ENCODE measurements at regions of chr3 and their contacts with region 1.

Region 1: GRCh38 chr3:81666493-81667121 is 94.8 kb downstream of the GBE1 start:
- DNase-seq: peak; percentile 15
- H3K4me3 ChIP-seq: no peak overlapping the region
- H3K27ac ChIP-seq: no peak overlapping the region
- H3K4me1 ChIP-seq: no peaks in the 10 kb centered on the region
- H3K27me3 ChIP-seq: no peaks in the 10 kb centered on the region
- CTCF ChIP-seq: peak; percentile 76

Region 2: DNA sequence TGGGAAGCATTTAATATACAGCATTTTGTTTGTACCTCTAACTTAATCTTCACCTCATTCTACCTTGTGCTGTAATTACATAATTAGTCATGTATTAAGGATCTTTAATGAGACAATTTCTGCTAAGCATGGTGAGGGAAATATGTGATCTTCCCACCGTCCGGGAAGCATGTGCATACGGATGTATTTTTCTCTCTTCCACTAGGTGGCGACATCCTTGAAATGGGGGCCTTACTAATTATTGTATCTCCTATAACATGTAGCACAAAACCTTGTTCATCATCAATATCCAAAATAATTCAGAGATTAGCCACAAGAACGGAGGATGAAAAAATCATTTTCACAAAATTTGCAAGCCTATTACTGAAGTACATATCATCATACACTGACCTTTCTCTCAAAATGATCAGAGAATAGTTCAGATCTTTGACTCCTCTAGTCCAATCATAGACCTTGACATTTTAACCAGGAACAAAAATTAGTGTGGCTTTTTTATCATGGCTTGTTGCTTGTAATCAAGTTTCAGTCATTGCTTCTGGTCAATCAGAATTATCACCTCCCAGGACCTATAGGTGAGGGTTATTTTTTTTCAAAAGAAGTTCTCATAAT is 243.7 kb after region 1 on chr3:
- CTCF ChIA-PET with region 1: no interaction called
- POLR2A ChIA-PET with region 1: no interaction called
- intact Hi-C with region 1: loop called (anchors 10 kb)
- DNase-seq: peak; percentile 65
- H3K4me3 ChIP-seq: no peak overlapping the region
- H3K27ac ChIP-seq: no peak overlapping the region
- H3K4me1 ChIP-seq: peaks cover 9% of the 10 kb centered on the region
- H3K27me3 ChIP-seq: no peaks in the 10 kb centered on the region
- CTCF ChIP-seq: peak; percentile 82